ENCODE measurements at regions of chr6 and their contacts with region 1.

Region 1: DNA sequence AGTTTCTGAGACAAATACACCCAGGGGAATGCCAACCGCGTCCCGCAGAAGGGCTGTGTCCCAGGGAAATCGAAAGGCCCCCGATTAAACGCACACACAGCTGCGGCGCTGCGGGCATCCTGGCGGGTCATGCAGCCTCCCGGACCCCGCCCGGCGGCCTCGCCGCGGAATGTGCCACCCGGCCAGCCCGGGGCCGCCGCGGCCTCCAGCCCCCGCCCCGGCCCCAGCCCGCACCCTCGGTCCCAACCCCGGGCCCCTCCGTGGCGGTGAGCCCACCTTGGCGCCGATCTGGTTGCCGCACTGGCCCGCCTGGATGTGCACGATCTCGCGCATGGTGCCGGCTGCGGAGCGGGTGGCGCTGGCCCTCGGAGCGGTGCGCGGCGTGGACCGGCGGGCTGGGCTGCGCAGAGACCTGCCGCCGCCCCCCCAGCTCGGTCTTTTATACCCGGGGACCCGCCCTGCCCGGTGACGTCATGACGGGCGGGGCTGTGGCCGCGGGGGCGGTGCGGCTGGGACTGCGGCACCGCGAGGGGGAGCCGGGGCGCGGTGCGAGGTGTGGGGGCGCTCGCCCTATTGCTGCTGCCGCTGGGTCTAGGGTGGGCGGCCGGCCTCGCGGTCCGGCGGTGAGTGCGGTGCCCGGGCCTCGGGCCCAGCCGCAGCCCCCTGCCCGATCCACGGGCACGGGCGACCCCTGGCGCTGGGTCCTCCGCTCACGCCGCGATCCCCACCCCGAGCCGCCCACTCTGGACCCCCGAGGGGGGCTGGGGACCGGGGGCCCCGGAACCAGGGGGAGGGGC is at the start of gene TUBB2A:
- DNase-seq: peak; percentile 72
- H3K4me3 ChIP-seq: peak within 1 kb of the TSS; percentile 70 to 88 (median 84)
- H3K27ac ChIP-seq: peak within 1 kb of the TSS; percentile 74
- H3K4me1 ChIP-seq: peaks cover 3% of the 10 kb centered on the region
- H3K27me3 ChIP-seq: no peaks in the 10 kb centered on the region
- CTCF ChIP-seq: peak; percentile 48 to 49
- POLR2A ChIP-seq: peak; percentile 98
- total RNA-seq, gene TUBB2A: 73.2 and 80.3 TPM in 2 replicates

Region 2: GRCh38 chr6:3118353-3119039 is 38.8 kb before region 1 on chr6 and contains the start of gene BPHL:
- CTCF ChIA-PET with region 1: interaction called, 3 read pairs
- POLR2A ChIA-PET with region 1: no interaction called
- dilution Hi-C with region 1: no loop called
- intact Hi-C with region 1: loop called (anchors 2 kb)
- DNase-seq: peak; percentile 94
- H3K4me3 ChIP-seq: peak within 1 kb of the TSS; percentile 54 to 98 (median 74)
- H3K27ac ChIP-seq: peak within 1 kb of the TSS; percentile 88
- H3K4me1 ChIP-seq: peaks cover 10% of the 10 kb centered on the region
- H3K27me3 ChIP-seq: no peaks in the 10 kb centered on the region
- CTCF ChIP-seq: no peak
- POLR2A ChIP-seq: peak; percentile 69
- total RNA-seq, gene BPHL: 14.8 and 16.6 TPM in 2 replicates

Region 3: GRCh38 chr6:3180350-3180749 is 23.0 kb after region 1 on chr6:
- CTCF ChIA-PET with region 1: interaction called, 6 read pairs
- POLR2A ChIA-PET with region 1: no interaction called
- dilution Hi-C with region 1: no loop called
- intact Hi-C with region 1: loop called (anchors 1 kb)
- DNase-seq: no peak
- H3K4me3 ChIP-seq: no peak overlapping the region
- H3K27ac ChIP-seq: no peak overlapping the region
- H3K4me1 ChIP-seq: peaks cover 5% of the 10 kb centered on the region
- H3K27me3 ChIP-seq: peaks cover 8% of the 10 kb centered on the region in 2 experiments
- CTCF ChIP-seq: no peak
- POLR2A ChIP-seq: no peak

Region 4: GRCh38 chr6:3251462-3252314 is 94.4 kb after region 1 on chr6:
- CTCF ChIA-PET with region 1: interaction called, 45 read pairs
- POLR2A ChIA-PET with region 1: interaction called, 5 read pairs
- dilution Hi-C with region 1: no loop called
- intact Hi-C with region 1: loop called (anchors 1 kb)
- DNase-seq: peak; percentile 79
- H3K4me3 ChIP-seq: no peak overlapping the region
- H3K27ac ChIP-seq: no peak overlapping the region
- H3K4me1 ChIP-seq: no peaks in the 10 kb centered on the region
- H3K27me3 ChIP-seq: peaks cover 11 to 14% of the 10 kb centered on the region in 2 experiments
- CTCF ChIP-seq: peak; percentile 95 to 97
- POLR2A ChIP-seq: no peak